OCI-LY7 (cell line): ENCODE measurements at regions of chr12 and their contacts with region 1.

Region 1: GRCh38 chr12:19757317-19757877 is 318.1 kb downstream of the AEBP2 start:
- DNase-seq: peak; percentile 26
- H3K4me3 ChIP-seq: no peak overlapping the region
- H3K27ac ChIP-seq: no peak overlapping the region
- H3K4me1 ChIP-seq: no peaks in the 10 kb centered on the region
- CTCF ChIP-seq: peak; percentile 84

Region 2: DNA sequence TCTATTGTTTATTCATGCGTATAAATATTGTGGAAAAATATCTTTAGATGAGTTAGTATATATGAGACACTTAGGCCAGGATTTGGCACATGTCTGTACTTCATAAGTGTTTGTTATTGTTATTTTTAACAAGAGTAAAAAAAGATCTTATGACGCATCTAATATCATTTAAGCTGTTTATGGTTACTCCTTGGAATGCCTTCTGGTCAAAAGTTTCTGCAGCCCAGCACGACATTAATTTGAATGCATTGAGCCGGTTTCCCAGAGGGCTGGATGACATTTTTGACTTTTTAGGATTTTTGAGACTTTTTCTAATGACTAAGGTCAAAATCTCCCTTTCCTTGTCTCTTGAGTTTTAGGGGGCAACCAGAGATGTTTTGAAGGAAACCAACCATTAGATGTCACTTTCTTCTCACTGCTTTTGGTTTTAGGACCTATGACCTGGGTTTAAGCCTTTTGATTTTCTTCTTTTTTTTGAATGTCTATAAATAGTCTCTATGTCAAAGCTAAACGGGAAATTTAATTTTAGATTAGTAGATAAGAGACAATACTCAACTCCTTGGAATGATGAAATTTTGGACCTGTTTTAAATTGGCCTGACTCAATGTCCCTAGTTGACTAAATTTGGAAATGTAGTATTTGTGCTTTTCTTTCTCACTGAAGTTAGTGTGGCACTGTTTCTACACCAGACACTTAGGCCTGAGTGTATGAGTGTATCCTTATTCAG is 102.6 kb before region 1 on chr12:
- CTCF ChIA-PET with region 1: no interaction called
- POLR2A ChIA-PET with region 1: no interaction called
- intact Hi-C with region 1: no loop called
- DNase-seq: no peak
- H3K4me3 ChIP-seq: no peak overlapping the region
- H3K27ac ChIP-seq: no peak overlapping the region
- H3K4me1 ChIP-seq: no peaks in the 10 kb centered on the region
- CTCF ChIP-seq: no peak

Region 3: DNA sequence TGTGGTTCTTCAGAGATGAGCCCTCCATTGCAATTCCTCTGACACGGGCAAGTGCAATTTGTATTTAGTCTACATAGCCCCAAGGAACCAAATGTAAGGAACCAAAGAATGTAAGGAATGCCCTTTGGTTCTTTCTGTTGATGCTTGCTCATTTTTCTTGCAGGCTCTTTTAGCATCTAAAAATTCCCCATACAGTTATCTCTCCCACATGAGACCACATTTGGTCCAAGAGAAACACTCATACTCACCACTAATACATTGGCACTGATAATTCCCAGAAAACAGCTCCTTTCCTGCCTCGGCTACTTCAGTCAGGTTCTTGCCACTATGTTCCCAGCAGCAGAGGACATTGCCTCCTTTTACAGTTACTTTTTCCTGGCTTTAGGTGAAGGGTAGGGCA is 14.5 kb after region 1 on chr12:
- CTCF ChIA-PET with region 1: no interaction called
- POLR2A ChIA-PET with region 1: no interaction called
- intact Hi-C with region 1: no loop called
- DNase-seq: no peak
- H3K4me3 ChIP-seq: no peak overlapping the region
- H3K27ac ChIP-seq: no peak overlapping the region
- H3K4me1 ChIP-seq: no peaks in the 10 kb centered on the region
- CTCF ChIP-seq: no peak

Region 4: GRCh38 chr12:19893514-19893913 is 136.1 kb after region 1 on chr12:
- CTCF ChIA-PET with region 1: no interaction called
- POLR2A ChIA-PET with region 1: no interaction called
- intact Hi-C with region 1: loop called (anchors 10 kb)
- DNase-seq: no peak
- H3K4me3 ChIP-seq: no peak overlapping the region
- H3K27ac ChIP-seq: no peak overlapping the region
- H3K4me1 ChIP-seq: no peaks in the 10 kb centered on the region
- CTCF ChIP-seq: no peak